BJ (cell line): ENCODE measurements at regions of chr1 and their contacts with region 1.

Region 1: GRCh38 chr1:246169019-246169418 is 338.1 kb downstream of the SMYD3 start:
- DNase-seq: no peak
- H3K4me3 ChIP-seq: no peak overlapping the region
- H3K27me3 ChIP-seq: no peaks in the 10 kb centered on the region
- CTCF ChIP-seq: no peak

Region 2: DNA sequence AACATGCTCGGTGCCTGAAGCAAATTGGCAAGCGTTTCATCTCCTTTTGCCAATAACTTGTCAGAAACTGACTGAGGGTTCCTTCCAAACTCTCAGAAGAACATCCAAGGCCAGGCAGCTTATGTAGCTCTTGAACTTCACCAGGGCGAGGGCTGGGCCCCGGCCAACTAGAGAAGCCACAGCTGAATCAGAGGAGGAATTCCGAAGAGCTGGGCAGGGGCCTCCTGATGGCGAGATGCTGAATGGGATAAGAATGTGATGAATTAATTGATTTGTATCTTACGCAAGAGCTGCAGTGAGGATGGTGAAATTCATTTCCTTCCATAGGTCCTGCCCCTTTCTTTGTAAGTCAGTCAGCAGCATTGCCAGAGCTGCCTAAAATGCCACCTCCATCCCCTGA is 668.5 kb before region 1 on chr1:
- CTCF ChIA-PET with region 1: no interaction called
- POLR2A ChIA-PET with region 1: interaction called, 11 read pairs
- DNase-seq: peak; percentile 67
- H3K4me3 ChIP-seq: no peak overlapping the region
- H3K27me3 ChIP-seq: no peaks in the 10 kb centered on the region
- CTCF ChIP-seq: 0 out of 2 replicates have a peak, but pooled peaks have one; percentile 28